Endothelial cell of umbilical vein (primary cell): ENCODE measurements at regions of chr15 and their contacts with region 1.

Region 1: DNA sequence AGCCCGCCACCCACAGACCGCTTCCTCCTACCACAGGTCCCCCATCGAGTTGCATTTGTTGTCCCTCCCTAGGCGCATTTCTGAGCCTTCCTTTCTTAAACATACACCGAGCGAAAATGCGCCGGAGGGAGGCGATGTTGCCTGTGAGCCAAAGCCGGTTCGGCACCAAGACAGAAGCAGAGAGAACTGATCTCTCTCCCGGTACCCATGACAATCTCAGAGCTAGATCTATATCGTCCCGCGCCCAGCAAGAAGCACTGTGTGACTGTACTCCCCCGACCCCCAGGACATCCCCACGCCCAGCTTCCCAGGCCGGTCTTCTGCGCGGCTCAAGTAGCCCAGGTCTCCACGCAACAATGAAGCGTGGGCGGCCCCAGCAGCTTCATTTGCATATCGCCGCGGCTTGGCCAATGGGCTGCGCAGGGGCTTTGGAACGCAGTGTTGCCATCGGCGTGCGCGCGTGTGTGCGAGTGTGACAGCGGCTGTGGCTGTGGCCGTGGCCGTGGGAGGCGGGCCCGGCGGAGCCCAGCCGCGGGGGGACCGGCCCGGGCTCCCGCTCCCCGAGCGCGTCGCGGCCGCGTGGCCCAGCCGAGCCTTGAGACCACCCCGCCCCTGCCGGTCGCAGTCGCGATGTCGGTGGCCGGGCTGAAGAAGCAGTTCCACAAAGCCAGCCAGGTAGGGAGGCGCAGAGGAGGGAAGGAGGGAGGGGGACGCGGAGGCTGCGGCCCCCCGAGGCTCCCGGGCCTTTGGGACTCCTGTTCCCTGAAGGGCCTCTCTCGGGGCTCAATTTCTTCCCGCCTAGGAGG is at the start of gene SH3GL3:
- DNase-seq: peak; percentile 80
- H3K4me3 ChIP-seq: peak within 1 kb of the TSS; percentile 29 to 46 (median 32)
- H3K27ac ChIP-seq: no peak within 1 kb of the TSS
- H3K4me1 ChIP-seq: no peaks in the 10 kb centered on the region
- H3K27me3 ChIP-seq: peaks cover 8 to 19% of the 10 kb centered on the region in 2 experiments
- CTCF ChIP-seq: peak; percentile 7 to 35
- POLR2A ChIP-seq: no peak
- total RNA-seq, gene SH3GL3: not detected in 2 replicates

Region 2: GRCh38 chr15:83164111-83164770 is 282.9 kb before region 1 on chr15:
- CTCF ChIA-PET with region 1: no interaction called
- POLR2A ChIA-PET with region 1: no interaction called
- dilution Hi-C with region 1: no loop called
- intact Hi-C with region 1: no loop called
- DNase-seq: peak; percentile 80
- H3K4me3 ChIP-seq: peak overlapping the region in 1 of 3 experiments; percentile 49
- H3K27ac ChIP-seq: peak overlapping the region; percentile 89
- H3K4me1 ChIP-seq: peaks cover 44% of the 10 kb centered on the region
- H3K27me3 ChIP-seq: no peaks in the 10 kb centered on the region
- CTCF ChIP-seq: no peak
- POLR2A ChIP-seq: no peak

Region 3: GRCh38 chr15:83372420-83372891 is 74.7 kb before region 1 on chr15:
- CTCF ChIA-PET with region 1: no interaction called
- POLR2A ChIA-PET with region 1: no interaction called
- dilution Hi-C with region 1: no loop called
- intact Hi-C with region 1: no loop called
- DNase-seq: no peak
- H3K4me3 ChIP-seq: no peak overlapping the region
- H3K27ac ChIP-seq: no peak overlapping the region
- H3K4me1 ChIP-seq: no peaks in the 10 kb centered on the region
- H3K27me3 ChIP-seq: peaks cover 5 to 18% of the 10 kb centered on the region in 2 experiments
- CTCF ChIP-seq: no peak
- POLR2A ChIP-seq: no peak

Region 4: GRCh38 chr15:83559310-83559966 is 112.3 kb after region 1 on chr15:
- CTCF ChIA-PET with region 1: interaction called, 11 read pairs
- POLR2A ChIA-PET with region 1: no interaction called
- dilution Hi-C with region 1: no loop called
- intact Hi-C with region 1: no loop called
- DNase-seq: peak; percentile 61
- H3K4me3 ChIP-seq: no peak overlapping the region
- H3K27ac ChIP-seq: no peak overlapping the region
- H3K4me1 ChIP-seq: no peaks in the 10 kb centered on the region
- H3K27me3 ChIP-seq: no peaks in the 10 kb centered on the region
- CTCF ChIP-seq: peak; percentile 70 to 77
- POLR2A ChIP-seq: no peak

Region 5: DNA sequence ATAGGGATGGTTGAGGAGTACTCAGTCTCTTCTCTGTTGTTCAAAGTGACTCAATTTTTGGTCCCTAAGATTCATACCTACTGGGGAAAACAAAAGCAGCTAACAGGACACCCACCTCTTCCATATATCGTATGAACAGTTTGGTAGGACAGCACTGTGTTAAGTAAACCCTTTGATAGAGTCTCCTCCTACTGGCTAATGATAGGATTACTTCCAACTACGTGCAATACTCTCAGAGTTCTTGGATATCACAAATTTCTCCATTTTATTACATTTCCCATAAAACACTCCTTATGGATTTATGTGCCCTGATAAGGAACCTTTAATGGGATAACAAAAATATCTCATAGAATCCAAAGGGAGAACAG is 588.3 kb after region 1 on chr15:
- CTCF ChIA-PET with region 1: no interaction called
- POLR2A ChIA-PET with region 1: no interaction called
- dilution Hi-C with region 1: no loop called
- intact Hi-C with region 1: loop called (anchors 10 kb)
- DNase-seq: no peak
- H3K4me3 ChIP-seq: no peak overlapping the region
- H3K27ac ChIP-seq: no peak overlapping the region
- H3K4me1 ChIP-seq: no peaks in the 10 kb centered on the region
- H3K27me3 ChIP-seq: no peaks in the 10 kb centered on the region
- CTCF ChIP-seq: peak in 1 of 2 donors; percentile 7
- POLR2A ChIP-seq: no peak